ENCODE measurements at regions of chr1 and their contacts with region 1.

Region 1: DNA sequence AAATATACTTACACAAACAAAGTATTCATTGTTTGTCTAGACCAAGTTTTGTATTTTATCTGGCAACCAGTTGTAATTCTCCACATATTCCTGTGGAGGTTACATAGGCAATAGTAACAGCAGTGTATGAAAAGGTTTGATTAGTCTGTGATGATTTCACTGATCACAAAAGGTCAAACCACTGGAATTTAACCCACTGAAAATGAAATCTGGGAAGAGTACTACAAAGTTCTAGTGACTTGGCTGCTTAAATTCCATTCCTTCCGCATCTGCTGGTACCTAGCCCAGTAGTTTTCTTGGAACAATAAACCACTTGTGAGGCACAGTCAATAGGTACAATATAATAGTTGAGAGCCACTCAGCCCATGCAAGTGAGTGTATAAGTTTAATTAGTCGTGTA is 205.4 kb downstream of the NFIA start:
- DNase-seq: peak; percentile 95
- H3K4me3 ChIP-seq: no peak overlapping the region
- H3K27ac ChIP-seq: peak overlapping the region; percentile 96
- H3K4me1 ChIP-seq: peaks cover 41% of the 10 kb centered on the region
- H3K27me3 ChIP-seq: no peaks in the 10 kb centered on the region
- CTCF ChIP-seq: peak in 1 of 2 donors; percentile 5

Region 2: DNA sequence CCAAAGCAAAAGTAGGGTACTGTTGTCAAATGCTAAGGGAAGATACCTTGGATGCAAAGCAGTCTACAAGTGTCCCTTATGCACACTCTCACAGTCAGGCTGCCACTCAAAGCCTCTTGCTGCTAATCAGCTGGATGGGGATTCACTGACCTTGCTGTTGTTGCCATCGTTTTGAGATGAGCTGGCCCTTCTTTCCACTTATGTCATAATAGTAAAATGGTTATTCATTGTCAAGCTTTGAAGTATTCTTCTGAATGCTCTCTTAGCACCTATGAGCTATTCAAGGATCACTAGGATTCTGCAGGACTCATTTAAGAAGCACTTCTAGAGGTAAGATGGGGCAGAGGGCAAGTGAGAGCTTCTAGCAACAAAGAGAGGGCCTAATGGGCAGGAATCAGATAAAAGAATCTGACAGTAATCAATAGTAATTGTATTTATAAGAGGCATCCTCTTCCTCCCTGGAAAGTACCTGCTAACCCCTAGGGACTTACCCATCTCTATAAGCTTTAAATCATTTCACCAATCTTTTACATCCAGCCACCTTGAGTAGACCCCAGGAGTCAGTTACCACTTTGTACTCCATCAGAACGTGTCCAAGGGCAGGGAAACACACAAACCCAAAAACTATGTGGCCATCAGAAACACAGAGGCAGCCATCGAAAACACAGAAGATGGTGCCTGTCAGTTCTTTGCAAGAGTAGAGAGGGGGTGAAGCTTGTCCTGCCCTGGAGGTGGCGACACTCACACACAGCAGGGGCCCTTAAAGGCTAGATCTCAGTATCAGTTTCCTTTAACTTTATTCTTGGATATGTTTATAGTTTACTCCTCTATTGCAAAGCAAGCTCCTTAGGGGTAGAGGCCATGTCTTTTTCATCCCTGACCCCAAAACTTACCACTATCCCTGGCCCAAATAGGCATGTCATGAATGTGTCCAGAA is 309.0 kb before region 1 on chr1:
- CTCF ChIA-PET with region 1: no interaction called
- dilution Hi-C with region 1: no loop called
- in situ Hi-C with region 1: no loop called
- intact Hi-C with region 1: no loop called
- DNase-seq: peak; percentile 38
- H3K4me3 ChIP-seq: no peak overlapping the region
- H3K27ac ChIP-seq: no peak overlapping the region
- H3K4me1 ChIP-seq: peaks cover 4% of the 10 kb centered on the region
- H3K27me3 ChIP-seq: no peaks in the 10 kb centered on the region
- CTCF ChIP-seq: peak; percentile 89 to 90

Region 3: DNA sequence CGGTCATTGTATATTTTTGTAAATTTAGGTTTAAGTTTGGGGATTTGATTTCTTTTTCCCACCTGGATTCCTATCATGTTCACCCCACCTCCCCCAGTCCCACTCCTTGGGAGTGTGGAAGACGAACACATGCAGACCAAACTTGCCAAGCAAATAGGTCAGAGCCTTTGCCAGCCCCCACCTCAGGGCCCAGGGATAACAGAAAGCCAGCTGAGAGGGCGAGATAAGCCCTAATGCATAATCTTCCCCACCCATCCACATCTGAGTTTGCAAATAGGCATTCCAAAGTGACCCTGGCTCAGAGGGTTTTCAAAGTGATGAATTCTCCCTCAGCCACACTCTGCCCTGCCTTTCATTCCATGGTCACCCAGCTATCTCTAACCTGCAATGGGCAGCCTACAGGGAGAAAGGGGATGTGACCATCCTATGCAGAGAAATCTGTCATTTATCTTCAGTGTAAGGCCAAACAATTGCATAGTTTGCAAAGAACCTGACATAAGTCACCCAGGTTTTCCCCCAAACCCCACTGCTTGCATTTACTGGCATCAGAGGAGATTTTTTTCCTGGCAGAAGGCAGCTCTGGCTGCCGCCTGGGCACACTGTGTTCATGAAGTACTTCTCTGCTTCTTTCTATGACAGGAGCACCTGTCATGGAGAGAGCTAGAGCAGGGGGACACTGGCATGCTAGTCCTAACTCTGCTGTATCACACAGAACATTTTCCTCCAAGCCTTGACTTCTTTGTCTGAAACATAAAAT is 274.4 kb before region 1 on chr1:
- CTCF ChIA-PET with region 1: no interaction called
- dilution Hi-C with region 1: no loop called
- in situ Hi-C with region 1: no loop called
- intact Hi-C with region 1: no loop called
- DNase-seq: no peak
- H3K4me3 ChIP-seq: no peak overlapping the region
- H3K27ac ChIP-seq: no peak overlapping the region
- H3K4me1 ChIP-seq: no peaks in the 10 kb centered on the region
- H3K27me3 ChIP-seq: peaks cover 2% of the 10 kb centered on the region
- CTCF ChIP-seq: no peak

Region 4: GRCh38 chr1:61322769-61323168 is 35.0 kb after region 1 on chr1:
- CTCF ChIA-PET with region 1: no interaction called
- dilution Hi-C with region 1: no loop called
- in situ Hi-C with region 1: no loop called
- intact Hi-C with region 1: loop called (anchors 2 kb)
- DNase-seq: peak; percentile 77
- H3K4me3 ChIP-seq: no peak overlapping the region
- H3K27ac ChIP-seq: peak overlapping the region; percentile 91
- H3K4me1 ChIP-seq: peaks cover 46% of the 10 kb centered on the region
- H3K27me3 ChIP-seq: no peaks in the 10 kb centered on the region
- CTCF ChIP-seq: no peak

Measured in mammary epithelial cell (primary cell).